ENCODE measurements at regions of chr11 and their contacts with region 1.

Region 1: GRCh38 chr11:94786264-94787126 is 18.3 kb downstream of the AMOTL1 start:
- DNase-seq: peak; percentile 63
- H3K4me3 ChIP-seq: no peak overlapping the region
- H3K27ac ChIP-seq: no peak overlapping the region
- H3K4me1 ChIP-seq: peaks cover 20% of the 10 kb centered on the region
- H3K27me3 ChIP-seq: no peaks in the 10 kb centered on the region
- CTCF ChIP-seq: peak; percentile 36 to 57
- POLR2A ChIP-seq: no peak

Region 2: GRCh38 chr11:94876645-94877442 is 90.3 kb after region 1 on chr11:
- CTCF ChIA-PET with region 1: interaction called, 4 read pairs
- POLR2A ChIA-PET with region 1: no interaction called
- dilution Hi-C with region 1: no loop called
- intact Hi-C with region 1: loop called (anchors 1 kb)
- DNase-seq: peak; percentile 94
- H3K4me3 ChIP-seq: no peak overlapping the region
- H3K27ac ChIP-seq: peak overlapping the region; percentile 75
- H3K4me1 ChIP-seq: peaks cover 14% of the 10 kb centered on the region
- H3K27me3 ChIP-seq: no peaks in the 10 kb centered on the region
- CTCF ChIP-seq: peak; percentile 28 to 32
- POLR2A ChIP-seq: no peak

Measured in endothelial cell of umbilical vein (primary cell).